HCT116 (cell line): ENCODE measurements at regions of chr12 and their contacts with region 1.

Region 1: GRCh38 chr12:6112004-6112403 is 12.5 kb downstream of the VWF start:
- DNase-seq: no peak
- ATAC-seq: no peak
- H3K4me3 ChIP-seq: no peak overlapping the region
- H3K27ac ChIP-seq: no peak overlapping the region
- H3K4me1 ChIP-seq: peaks cover 18 to 36% of the 10 kb centered on the region in 2 experiments
- H3K27me3 ChIP-seq: no peaks in the 10 kb centered on the region
- CTCF ChIP-seq: no peak
- POLR2A ChIP-seq: no peak
- RAD21 ChIP-seq: no peak

Region 2: DNA sequence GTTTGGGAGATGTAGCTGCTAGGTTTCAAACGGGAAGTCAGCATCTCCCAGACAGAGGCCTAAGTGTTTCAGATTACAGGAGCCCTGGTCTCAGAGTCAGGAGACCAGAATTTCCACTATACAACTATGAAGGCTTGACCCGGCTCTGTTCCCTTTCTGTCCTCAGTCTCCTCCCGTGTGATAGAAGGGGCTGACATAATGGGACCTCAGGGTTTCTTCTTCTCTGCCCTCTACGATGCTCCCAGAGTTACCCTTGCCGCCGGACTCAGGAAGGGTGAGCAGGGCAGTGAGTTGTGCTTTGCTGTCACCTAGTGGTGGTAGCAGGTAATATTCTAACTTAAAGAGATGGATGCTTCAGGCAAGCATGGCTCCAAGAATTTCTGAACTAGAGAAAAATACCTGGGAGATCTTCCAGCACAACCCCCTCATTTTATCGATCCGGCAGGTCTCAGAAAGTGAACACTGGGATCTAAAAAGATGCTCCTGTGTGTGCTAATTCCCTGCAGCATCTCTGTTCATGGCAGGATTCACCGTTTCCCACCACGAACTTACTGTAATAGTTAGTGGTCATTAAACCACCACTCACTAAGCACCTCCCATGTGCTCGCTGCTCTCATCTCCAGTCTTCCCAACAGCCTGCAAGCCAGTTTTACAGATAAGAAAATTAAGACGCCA is 72.0 kb before region 1 on chr12:
- CTCF ChIA-PET with region 1: no interaction called
- POLR2A ChIA-PET with region 1: no interaction called
- RAD21 ChIA-PET with region 1: no interaction called
- intact Hi-C with region 1: no loop called
- DNase-seq: peak; percentile 57
- ATAC-seq: peak; percentile 85
- H3K4me3 ChIP-seq: no peak overlapping the region
- H3K27ac ChIP-seq: no peak overlapping the region
- H3K4me1 ChIP-seq: peaks cover 4 to 19% of the 10 kb centered on the region in 2 experiments; a peak in 3 of 4 replicates
- H3K27me3 ChIP-seq: no peaks in the 10 kb centered on the region
- CTCF ChIP-seq: peak; percentile 83 to 92 (median 89)
- POLR2A ChIP-seq: no peak
- RAD21 ChIP-seq: peak; percentile 93

Region 3: DNA sequence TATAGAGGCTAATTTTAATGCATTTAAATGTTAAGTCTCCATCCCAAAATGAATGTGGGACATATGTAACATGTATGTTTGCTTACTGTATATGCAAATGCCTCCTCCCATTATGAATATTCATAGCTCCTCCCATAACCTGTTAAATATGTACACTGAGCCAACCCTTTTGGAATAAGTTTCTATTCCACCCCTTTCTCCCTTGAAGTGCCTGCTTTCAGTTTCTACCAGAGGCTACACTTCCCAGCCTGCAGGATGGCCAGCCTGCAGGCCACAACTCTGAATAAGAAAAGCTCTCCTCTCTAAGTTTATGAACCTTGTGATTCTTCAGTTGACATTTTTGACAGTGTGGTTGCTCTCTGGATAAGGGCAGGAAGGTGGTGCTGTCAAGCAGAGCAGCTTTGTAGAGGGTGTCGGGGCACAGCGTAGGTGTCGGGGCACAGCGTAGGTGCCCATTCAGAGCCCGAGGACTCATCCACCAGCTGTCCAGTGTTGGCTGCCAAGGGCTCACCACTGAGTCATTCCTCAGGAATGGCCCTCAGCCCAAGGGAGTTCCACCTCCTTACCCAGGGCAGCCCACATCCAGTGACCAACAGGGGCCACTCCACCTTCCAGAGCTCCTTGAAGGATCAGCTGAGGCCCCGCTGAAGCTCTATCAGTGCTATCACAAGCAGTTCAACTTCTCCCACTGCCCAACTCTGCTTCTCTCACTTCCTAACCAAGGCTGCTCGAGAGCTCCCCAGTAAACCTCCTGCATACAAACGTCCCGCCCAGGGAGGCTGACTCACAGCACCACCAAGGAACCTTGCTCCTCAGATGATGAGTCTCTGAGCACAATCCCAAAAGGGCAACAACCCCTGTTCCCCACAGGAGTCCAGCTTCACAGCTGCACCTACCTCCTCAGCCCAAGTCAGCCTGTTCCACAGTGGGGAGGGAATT is 19.0 kb before region 1 on chr12:
- CTCF ChIA-PET with region 1: no interaction called
- POLR2A ChIA-PET with region 1: interaction called, 3 read pairs
- RAD21 ChIA-PET with region 1: no interaction called
- intact Hi-C with region 1: loop called (anchors 1 kb)
- DNase-seq: peak; percentile 82
- ATAC-seq: peak; percentile 87
- H3K4me3 ChIP-seq: peak overlapping the region; percentile 15 to 52
- H3K27ac ChIP-seq: peak overlapping the region; percentile 73
- H3K4me1 ChIP-seq: peaks cover 33 to 64% of the 10 kb centered on the region in 2 experiments
- H3K27me3 ChIP-seq: no peaks in the 10 kb centered on the region
- CTCF ChIP-seq: no peak
- POLR2A ChIP-seq: no peak
- RAD21 ChIP-seq: no peak; the same call in none of the 2 replicates